ENCODE measurements at regions of chr15 and their contacts with region 1.

Region 1: GRCh38 chr15:38699633-38700230 is 135.1 kb upstream of the RASGRP1 start:
- DNase-seq: peak; percentile 63
- H3K4me3 Mint-ChIP-seq: no peak overlapping the region
- H3K27ac Mint-ChIP-seq: peak overlapping the region; percentile 24
- H3K4me1 Mint-ChIP-seq: peaks cover 58% of the 10 kb centered on the region
- H3K27me3 Mint-ChIP-seq: no peaks in the 10 kb centered on the region

Region 2: GRCh38 chr15:38072348-38073177 is 627.2 kb before region 1 on chr15:
- intact Hi-C with region 1: loop called (anchors 10 kb)
- DNase-seq: peak; percentile 11
- H3K4me3 Mint-ChIP-seq: peak overlapping the region; percentile 50
- H3K27ac Mint-ChIP-seq: no peak overlapping the region
- H3K4me1 Mint-ChIP-seq: peaks cover 28% of the 10 kb centered on the region
- H3K27me3 Mint-ChIP-seq: peaks cover 83% of the 10 kb centered on the region

Region 3: GRCh38 chr15:38252481-38253412 is 447.0 kb before region 1 on chr15 and contains the start of gene SPRED1:
- intact Hi-C with region 1: loop called (anchors 5 kb)
- DNase-seq: no peak
- H3K4me3 Mint-ChIP-seq: peak within 1 kb of the TSS; percentile 81
- H3K27ac Mint-ChIP-seq: no peak within 1 kb of the TSS
- H3K4me1 Mint-ChIP-seq: peaks cover 23% of the 10 kb centered on the region
- H3K27me3 Mint-ChIP-seq: peaks cover 72% of the 10 kb centered on the region
- total RNA-seq, gene SPRED1: 0.14 and 0.46 TPM in 2 replicates

Region 4: DNA sequence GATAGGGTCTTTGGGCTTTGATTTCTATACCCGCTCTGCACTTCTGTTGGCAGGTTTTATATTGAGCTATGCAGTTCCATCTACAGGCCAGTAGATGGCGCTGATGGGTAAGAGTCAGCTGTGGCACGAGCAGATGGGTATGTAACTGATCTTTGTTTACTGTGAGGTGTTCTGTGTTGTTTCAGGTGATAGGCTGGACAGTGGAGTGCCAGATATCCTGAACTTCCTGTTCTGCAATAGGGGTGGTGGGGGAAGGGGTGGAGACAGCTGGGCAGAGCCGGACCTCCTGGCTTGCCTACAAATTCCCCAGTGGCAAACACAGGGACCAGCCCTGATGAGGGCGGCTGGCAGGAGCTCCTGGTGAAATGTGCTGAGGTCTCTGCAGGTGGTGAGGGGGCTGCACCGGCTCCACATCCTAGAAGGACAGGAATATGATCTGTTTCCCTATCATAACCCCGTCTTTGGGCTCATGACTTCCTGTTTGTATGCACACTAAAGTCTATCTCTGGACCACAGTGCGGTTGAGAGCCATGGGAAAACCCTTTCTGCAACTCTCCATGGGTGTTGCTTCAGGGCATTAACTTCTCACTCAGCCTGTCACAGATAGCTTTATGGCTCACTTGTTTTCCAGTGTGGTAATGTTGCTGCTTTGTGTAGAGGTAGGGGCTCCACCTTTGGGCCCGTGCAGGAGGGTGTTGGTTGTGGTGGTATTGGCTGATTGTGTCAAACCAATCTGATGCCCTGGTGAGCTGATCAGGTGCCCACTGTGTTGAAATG is 259.2 kb before region 1 on chr15:
- intact Hi-C with region 1: loop called (anchors 1 kb)
- DNase-seq: peak; percentile 31
- H3K4me3 Mint-ChIP-seq: no peak overlapping the region
- H3K27ac Mint-ChIP-seq: peak overlapping the region; percentile 2
- H3K4me1 Mint-ChIP-seq: peaks cover 8% of the 10 kb centered on the region
- H3K27me3 Mint-ChIP-seq: peaks cover 47% of the 10 kb centered on the region

Region 5: GRCh38 chr15:38474155-38474757 is 225.5 kb before region 1 on chr15:
- intact Hi-C with region 1: loop called (anchors 1 kb)
- DNase-seq: no peak
- H3K4me3 Mint-ChIP-seq: no peak overlapping the region
- H3K27ac Mint-ChIP-seq: no peak overlapping the region
- H3K4me1 Mint-ChIP-seq: peaks cover 4% of the 10 kb centered on the region
- H3K27me3 Mint-ChIP-seq: no peaks in the 10 kb centered on the region

Region 6: GRCh38 chr15:38714309-38715072 is 14.8 kb after region 1 on chr15:
- intact Hi-C with region 1: no loop called
- DNase-seq: no peak
- H3K4me3 Mint-ChIP-seq: no peak overlapping the region
- H3K27ac Mint-ChIP-seq: no peak overlapping the region
- H3K4me1 Mint-ChIP-seq: no peaks in the 10 kb centered on the region
- H3K27me3 Mint-ChIP-seq: peaks cover 8% of the 10 kb centered on the region

Region 7: DNA sequence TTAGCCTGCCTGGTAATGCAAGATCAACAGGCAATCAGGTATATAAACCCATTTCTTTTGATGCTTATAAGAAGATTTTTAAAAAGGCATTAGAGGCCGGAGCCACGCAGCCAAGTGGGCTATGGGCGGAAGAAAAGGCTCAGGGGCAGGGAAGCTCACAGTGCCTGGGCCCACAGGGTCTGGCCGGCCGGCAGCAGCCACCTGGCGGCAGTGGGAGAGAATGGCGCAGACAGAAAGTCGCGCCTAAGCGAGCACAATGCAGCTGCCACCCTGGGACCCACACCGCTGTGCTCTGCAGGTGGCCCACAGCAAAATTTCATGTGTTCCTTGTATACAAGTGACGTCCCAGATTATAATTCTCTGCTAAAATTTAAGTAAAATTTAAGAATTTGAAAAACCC is 313.5 kb after region 1 on chr15:
- intact Hi-C with region 1: no loop called
- DNase-seq: no peak
- H3K4me3 Mint-ChIP-seq: no peak overlapping the region
- H3K27ac Mint-ChIP-seq: no peak overlapping the region
- H3K4me1 Mint-ChIP-seq: no peaks in the 10 kb centered on the region
- H3K27me3 Mint-ChIP-seq: no peaks in the 10 kb centered on the region

Measured in activated T-helper 2 cell treated with anti-CD3 and anti-CD28 coated beads, Interferon-gamma antibody, Interleukin-2, Interleukin-4, amounts not matched to agents 10 μg/mL and 5 μg/mL and 100 μg/mL, durations not matched to agents 14 hours and 24 hours and 36 hours (primary cell).